Heart left ventricle (tissue), 16 donors: ENCODE measurements at regions of chr2 and their contacts with region 1.

Region 1: DNA sequence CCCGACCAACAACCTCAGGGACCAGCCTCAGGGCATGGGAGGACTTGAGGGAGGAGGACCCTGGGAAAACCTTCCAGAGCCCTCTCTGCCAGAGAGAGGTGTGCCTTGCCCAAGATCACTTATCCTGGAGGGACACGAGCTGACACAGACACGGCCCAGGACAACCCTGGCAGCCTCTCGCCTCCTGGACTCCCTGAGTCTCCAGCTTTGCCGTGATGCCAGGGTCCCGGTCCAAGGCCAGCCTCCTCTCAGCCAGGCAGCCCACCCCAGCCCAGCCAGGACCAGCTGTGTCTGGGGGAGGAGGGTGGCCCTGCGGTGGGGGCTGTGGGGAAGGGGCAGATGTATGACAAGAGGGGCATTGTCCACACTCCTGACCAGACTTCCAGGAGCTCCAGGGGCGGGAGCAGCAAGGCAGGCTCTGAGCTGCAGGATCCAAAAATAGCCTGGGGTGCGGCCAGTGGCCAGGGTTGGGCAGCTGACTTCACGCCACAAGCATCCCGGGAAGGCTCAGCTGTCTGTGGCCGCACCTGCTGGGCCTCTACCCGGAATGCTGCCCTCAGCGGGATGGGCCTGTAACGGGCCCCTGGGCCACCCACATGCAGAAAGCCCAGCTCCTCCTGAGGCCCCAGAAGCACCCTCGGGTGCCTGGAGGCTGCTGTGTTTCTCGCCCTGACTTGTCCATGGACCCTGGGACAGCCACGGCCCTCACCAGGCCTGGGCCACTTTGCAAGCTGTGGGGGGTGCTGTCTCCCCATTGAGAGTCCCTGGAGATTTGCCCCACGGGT is 65.5 kb upstream of the GPC1 start:
- DNase-seq: peak; percentile 85 to 91 (median 86)
- ATAC-seq: peak; percentile 75 to 90 (median 84)
- H3K4me3 ChIP-seq: no peak overlapping the region
- H3K27ac ChIP-seq: peak overlapping the region; percentile 75 to 99 (median 92)
- H3K4me1 ChIP-seq: peaks cover 0 to 74% (median 31%) of the 10 kb centered on the region in 12 donors
- H3K27me3 ChIP-seq: no peaks in the 10 kb centered on the region
- CTCF ChIP-seq: peak in 2 of 12 donors; percentile 9 to 13
- POLR2A ChIP-seq: no peak

Region 2: GRCh38 chr2:240250985-240251847 is 118.8 kb before region 1 on chr2:
- intact Hi-C with region 1: loop called in 1 of 10 experiments (anchors 5 kb)
- DNase-seq: peak; percentile 88 to 97 (median 92)
- ATAC-seq: peak; percentile 88 to 91 (median 90)
- H3K4me3 ChIP-seq: peak overlapping the region in 8 of 12 donors; percentile 11 to 42 (median 22)
- H3K27ac ChIP-seq: peak overlapping the region; percentile 72 to 97 (median 87)
- H3K4me1 ChIP-seq: peaks cover 6 to 52% (median 24%) of the 10 kb centered on the region in 12 donors
- H3K27me3 ChIP-seq: no peaks in the 10 kb centered on the region
- CTCF ChIP-seq: no peak
- POLR2A ChIP-seq: no peak

Region 3: GRCh38 chr2:240298803-240299709 is 70.9 kb before region 1 on chr2:
- intact Hi-C with region 1: loop called in 2 of 10 experiments (anchors 2 to 5 kb)
- DNase-seq: peak in 1 of 5 donors; percentile 18
- ATAC-seq: no peak
- H3K4me3 ChIP-seq: no peak overlapping the region
- H3K27ac ChIP-seq: no peak overlapping the region
- H3K4me1 ChIP-seq: peaks cover 0 to 35% (median 6%) of the 10 kb centered on the region in 12 donors
- H3K27me3 ChIP-seq: peaks cover 0 to 3% (median 0%) of the 10 kb centered on the region in 9 donors
- CTCF ChIP-seq: no peak
- POLR2A ChIP-seq: no peak

Region 4: DNA sequence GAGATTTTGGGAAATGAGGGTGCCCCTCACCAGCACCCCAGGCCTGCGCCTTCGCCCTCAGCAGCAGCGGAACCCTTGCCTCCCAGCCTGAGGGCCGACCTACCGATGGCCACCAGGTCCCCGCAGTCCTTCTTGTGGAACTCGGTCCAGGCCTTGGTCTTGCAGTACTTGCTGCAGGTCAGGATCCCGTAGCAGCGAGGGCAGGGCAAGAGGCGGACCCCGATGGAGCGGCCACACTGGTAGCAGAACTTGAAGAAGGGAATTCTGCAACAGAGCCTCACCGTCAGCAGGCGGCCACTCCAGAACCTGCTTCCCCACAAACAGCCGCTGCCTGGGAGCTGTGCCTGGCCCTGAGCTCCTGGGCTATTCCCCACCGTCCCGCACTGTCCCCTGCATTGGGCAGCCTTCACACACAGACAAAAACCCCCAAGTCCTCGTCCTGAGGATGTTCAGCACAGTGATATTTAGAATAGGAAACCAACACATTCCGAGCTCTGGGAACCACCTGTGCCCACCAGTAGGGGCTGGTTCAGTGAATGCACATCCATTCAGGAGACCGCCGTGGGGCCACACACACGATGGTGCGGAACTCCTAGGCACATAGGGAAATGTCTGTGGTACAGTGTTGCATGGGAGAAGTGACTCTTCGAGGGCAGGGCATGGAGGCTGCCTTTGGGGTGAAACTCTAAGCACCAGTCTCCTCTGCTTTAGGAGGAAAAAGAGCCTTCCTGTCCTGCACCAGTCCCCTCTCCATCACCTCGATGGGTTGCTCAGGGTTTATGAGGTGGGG is 111.0 kb after region 1 on chr2:
- intact Hi-C with region 1: no loop called
- DNase-seq: peak in 3 of 5 donors; percentile 5 to 54 (median 22)
- ATAC-seq: no peak
- H3K4me3 ChIP-seq: no peak overlapping the region
- H3K27ac ChIP-seq: no peak overlapping the region
- H3K4me1 ChIP-seq: no peaks in the 10 kb centered on the region
- H3K27me3 ChIP-seq: no peaks in the 10 kb centered on the region
- CTCF ChIP-seq: no peak
- POLR2A ChIP-seq: no peak